ENCODE measurements at regions of chr7 and their contacts with region 1.

Region 1: GRCh38 chr7:20598459-20599309 is 16.8 kb upstream of the ABCB5 start:
- DNase-seq: peak in 6 of 9 donors; percentile 18 to 44 (median 31)
- ATAC-seq: peak; percentile 79
- H3K4me3 ChIP-seq: no peak overlapping the region
- H3K4me3 Mint-ChIP-seq: no peak overlapping the region
- H3K27ac ChIP-seq: no peak overlapping the region
- H3K27ac Mint-ChIP-seq: no peak overlapping the region
- H3K4me1 ChIP-seq: no peaks in the 10 kb centered on the region
- H3K4me1 Mint-ChIP-seq: peaks cover 0 to 5% (median 0%) of the 10 kb centered on the region in 7 donors
- H3K27me3 ChIP-seq: no peaks in the 10 kb centered on the region
- H3K27me3 Mint-ChIP-seq: peaks cover 5 to 33% (median 22%) of the 10 kb centered on the region in 5 donors

Region 2: DNA sequence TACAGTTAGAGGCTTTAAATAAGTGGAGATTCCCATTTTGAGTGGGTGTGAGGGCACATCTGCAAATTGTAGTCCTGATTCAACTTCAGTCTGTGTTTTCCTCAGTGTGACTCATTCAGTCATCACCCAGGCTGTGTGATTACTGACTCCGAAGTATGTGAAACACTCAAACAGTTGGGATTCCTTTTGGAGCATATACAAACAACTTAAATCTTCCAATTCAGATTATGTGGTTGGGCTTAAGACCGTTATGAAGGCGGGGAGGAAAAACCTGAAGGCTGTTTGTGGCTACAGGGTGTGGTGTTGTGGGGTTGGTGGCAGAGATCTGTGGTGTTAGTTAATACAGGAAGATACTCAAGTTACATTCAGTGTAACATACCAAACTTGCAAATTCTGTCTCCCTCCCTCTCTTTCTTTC is 1193.8 kb before region 1 on chr7:
- CTCF ChIA-PET with region 1: no interaction called
- POLR2A ChIA-PET with region 1: no interaction called
- intact Hi-C with region 1: no loop called
- DNase-seq: no peak
- ATAC-seq: peak; percentile 31
- H3K4me3 ChIP-seq: no peak overlapping the region
- H3K4me3 Mint-ChIP-seq: peak overlapping the region in 1 of 10 donors; percentile 51
- H3K27ac ChIP-seq: no peak overlapping the region
- H3K27ac Mint-ChIP-seq: peak overlapping the region in 1 of 9 donors; percentile 58
- H3K4me1 ChIP-seq: no peaks in the 10 kb centered on the region
- H3K4me1 Mint-ChIP-seq: peaks cover 0 to 6% (median 0%) of the 10 kb centered on the region in 7 donors
- H3K27me3 ChIP-seq: no peaks in the 10 kb centered on the region
- H3K27me3 Mint-ChIP-seq: no peaks in the 10 kb centered on the region

Region 3: DNA sequence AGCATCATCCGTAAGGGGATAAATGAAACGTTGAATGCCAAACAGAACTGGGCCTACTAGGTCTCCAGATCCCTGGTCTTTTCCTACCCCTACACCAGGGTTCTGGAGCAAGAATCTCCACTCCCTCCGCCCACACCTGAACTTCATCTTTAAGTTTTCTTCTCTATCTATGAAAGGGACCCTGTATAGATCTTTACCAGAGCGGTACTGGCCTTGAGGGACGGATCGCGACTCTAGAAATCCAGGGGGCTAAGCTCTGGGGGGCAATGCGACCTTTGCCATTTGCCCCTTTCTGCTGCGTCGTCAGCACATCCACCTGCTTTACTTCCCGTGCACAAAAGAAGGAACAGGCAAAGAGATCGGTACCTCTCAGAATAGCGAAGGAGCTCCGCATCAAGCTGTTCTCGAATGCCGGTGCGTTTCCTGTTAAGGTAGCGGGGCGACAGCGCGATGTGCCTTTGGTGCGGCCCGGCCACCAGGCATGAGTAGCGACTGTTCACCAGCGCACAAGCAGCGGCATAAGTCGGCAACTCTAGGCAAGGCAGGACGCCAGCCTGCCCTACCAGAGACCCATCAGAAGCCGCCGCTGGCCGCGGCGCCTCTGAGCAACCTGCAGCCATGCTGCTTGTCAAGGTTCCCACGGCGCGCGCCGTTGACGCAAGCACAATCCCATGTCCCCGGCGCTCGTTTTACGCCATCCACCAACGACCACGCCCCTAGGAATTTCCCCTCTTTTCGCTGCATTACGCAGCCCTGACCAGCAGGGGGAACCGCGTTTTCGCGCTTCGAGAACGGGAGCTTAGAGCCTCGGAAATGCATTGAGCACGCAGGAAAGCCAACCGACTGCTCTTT is 890.1 kb before region 1 on chr7 and contains the start of gene POLR1F:
- CTCF ChIA-PET with region 1: interaction called, 57 read pairs
- POLR2A ChIA-PET with region 1: interaction called, 5 read pairs
- intact Hi-C with region 1: loop called (anchors 1 kb)
- DNase-seq: peak; percentile 84 to 97 (median 95)
- ATAC-seq: peak; percentile 98
- H3K4me3 ChIP-seq: peak within 1 kb of the TSS; percentile 70
- H3K4me3 Mint-ChIP-seq: peak within 1 kb of the TSS; percentile 95 to 99 (median 97)
- H3K27ac ChIP-seq: peak within 1 kb of the TSS; percentile 77
- H3K27ac Mint-ChIP-seq: peak within 1 kb of the TSS; percentile 89 to 98 (median 95)
- H3K4me1 ChIP-seq: peaks cover 19 to 23% of the 10 kb centered on the region in 2 donors
- H3K4me1 Mint-ChIP-seq: peaks cover 31 to 66% (median 57%) of the 10 kb centered on the region in 7 donors
- H3K27me3 ChIP-seq: no peaks in the 10 kb centered on the region
- H3K27me3 Mint-ChIP-seq: peaks cover 0 to 5% (median 0%) of the 10 kb centered on the region in 5 donors
- total RNA-seq, gene POLR1F: 11.8 to 27.3 (median 19.0) TPM

Region 4: GRCh38 chr7:19713676-19714075 is 885.0 kb before region 1 on chr7:
- CTCF ChIA-PET with region 1: interaction called, 57 read pairs
- POLR2A ChIA-PET with region 1: interaction called, 5 read pairs
- intact Hi-C with region 1: loop called (anchors 1 kb)
- DNase-seq: peak in 7 of 9 donors; percentile 15 to 59 (median 52)
- ATAC-seq: no peak
- H3K4me3 ChIP-seq: no peak overlapping the region
- H3K4me3 Mint-ChIP-seq: no peak overlapping the region
- H3K27ac ChIP-seq: no peak overlapping the region
- H3K27ac Mint-ChIP-seq: peak overlapping the region in 1 of 9 donors; percentile 65
- H3K4me1 ChIP-seq: peaks cover 7% of the 10 kb centered on the region in 2 donors
- H3K4me1 Mint-ChIP-seq: peaks cover 7 to 25% (median 15%) of the 10 kb centered on the region in 7 donors
- H3K27me3 ChIP-seq: no peaks in the 10 kb centered on the region
- H3K27me3 Mint-ChIP-seq: peaks cover 0 to 21% (median 0%) of the 10 kb centered on the region in 5 donors

Region 5: GRCh38 chr7:19747740-19748339 is 850.8 kb before region 1 on chr7:
- CTCF ChIA-PET with region 1: interaction called, 3 read pairs
- POLR2A ChIA-PET with region 1: no interaction called
- intact Hi-C with region 1: loop called in 1 of 2 experiments (anchors 2 kb)
- DNase-seq: peak in 1 of 9 donors; percentile 1
- ATAC-seq: no peak
- H3K4me3 ChIP-seq: no peak overlapping the region
- H3K4me3 Mint-ChIP-seq: no peak overlapping the region
- H3K27ac ChIP-seq: no peak overlapping the region
- H3K27ac Mint-ChIP-seq: no peak overlapping the region
- H3K4me1 ChIP-seq: no peaks in the 10 kb centered on the region
- H3K4me1 Mint-ChIP-seq: no peaks in the 10 kb centered on the region
- H3K27me3 ChIP-seq: no peaks in the 10 kb centered on the region
- H3K27me3 Mint-ChIP-seq: peaks cover under 1 to 12% (median 4%) of the 10 kb centered on the region in 5 donors

Region 6: DNA sequence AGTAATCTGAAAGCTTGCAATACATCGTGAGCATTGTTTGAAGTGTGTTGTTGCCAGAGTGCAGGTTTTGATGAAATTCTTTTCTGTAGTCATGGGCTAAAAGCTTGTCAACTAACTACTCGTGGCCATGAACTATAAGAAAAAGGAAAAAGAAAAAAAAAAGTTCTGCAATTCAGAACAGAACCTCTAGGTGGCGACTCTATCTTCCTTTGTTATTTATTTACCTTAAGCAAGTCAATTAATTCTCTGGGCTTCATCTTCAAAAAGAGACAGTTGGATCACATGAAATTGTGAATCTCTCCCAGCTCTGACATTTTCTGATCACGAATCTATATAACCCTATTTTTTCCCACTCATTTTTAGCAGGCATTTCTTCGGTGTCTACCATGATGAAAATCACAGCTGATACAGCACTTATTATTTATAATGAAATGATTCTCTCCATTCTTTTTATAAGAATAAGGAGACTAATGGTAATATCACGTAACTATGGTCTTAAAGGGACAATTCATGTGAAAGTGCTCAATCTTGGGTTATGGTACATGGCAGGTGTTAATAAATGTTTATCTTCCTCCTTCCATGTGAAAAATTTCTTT is 844.1 kb before region 1 on chr7:
- CTCF ChIA-PET with region 1: interaction called, 3 read pairs
- POLR2A ChIA-PET with region 1: no interaction called
- intact Hi-C with region 1: loop called in 1 of 2 experiments (anchors 1 kb)
- DNase-seq: peak in 4 of 9 donors; percentile 1 to 26 (median 12)
- ATAC-seq: no peak
- H3K4me3 ChIP-seq: no peak overlapping the region
- H3K4me3 Mint-ChIP-seq: no peak overlapping the region
- H3K27ac ChIP-seq: no peak overlapping the region
- H3K27ac Mint-ChIP-seq: no peak overlapping the region
- H3K4me1 ChIP-seq: no peaks in the 10 kb centered on the region
- H3K4me1 Mint-ChIP-seq: no peaks in the 10 kb centered on the region
- H3K27me3 ChIP-seq: no peaks in the 10 kb centered on the region
- H3K27me3 Mint-ChIP-seq: peaks cover 0 to 13% (median 4%) of the 10 kb centered on the region in 5 donors

Region 7: GRCh38 chr7:19982841-19983835 is 615.5 kb before region 1 on chr7:
- CTCF ChIA-PET with region 1: no interaction called
- POLR2A ChIA-PET with region 1: no interaction called
- intact Hi-C with region 1: loop called in 1 of 2 experiments (anchors 5 kb)
- DNase-seq: no peak
- ATAC-seq: no peak
- H3K4me3 ChIP-seq: no peak overlapping the region
- H3K4me3 Mint-ChIP-seq: no peak overlapping the region
- H3K27ac ChIP-seq: no peak overlapping the region
- H3K27ac Mint-ChIP-seq: no peak overlapping the region
- H3K4me1 ChIP-seq: no peaks in the 10 kb centered on the region
- H3K4me1 Mint-ChIP-seq: no peaks in the 10 kb centered on the region
- H3K27me3 ChIP-seq: no peaks in the 10 kb centered on the region
- H3K27me3 Mint-ChIP-seq: no peaks in the 10 kb centered on the region

Region 8: DNA sequence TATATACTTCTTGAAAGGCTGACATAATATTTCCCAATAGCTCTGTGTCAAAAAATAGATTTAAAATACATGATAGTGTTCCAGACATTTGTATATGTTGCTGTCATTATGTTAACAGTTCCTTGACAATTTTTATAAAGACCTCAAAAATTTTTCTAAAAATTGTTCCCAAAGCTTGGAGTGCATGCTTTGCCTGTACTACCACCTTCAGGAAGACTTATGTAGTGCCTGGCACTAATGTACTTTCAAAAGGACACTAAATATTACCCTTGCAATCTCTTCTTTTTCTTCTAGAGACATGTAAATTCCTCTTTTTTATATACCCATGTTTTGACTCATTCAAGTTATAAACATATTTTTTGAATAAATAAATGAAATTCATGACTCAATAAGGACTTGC is 236.0 kb after region 1 on chr7:
- CTCF ChIA-PET with region 1: no interaction called
- POLR2A ChIA-PET with region 1: no interaction called
- intact Hi-C with region 1: no loop called
- DNase-seq: no peak
- ATAC-seq: no peak
- H3K4me3 ChIP-seq: no peak overlapping the region
- H3K4me3 Mint-ChIP-seq: no peak overlapping the region
- H3K27ac ChIP-seq: no peak overlapping the region
- H3K27ac Mint-ChIP-seq: no peak overlapping the region
- H3K4me1 ChIP-seq: no peaks in the 10 kb centered on the region
- H3K4me1 Mint-ChIP-seq: no peaks in the 10 kb centered on the region
- H3K27me3 ChIP-seq: no peaks in the 10 kb centered on the region
- H3K27me3 Mint-ChIP-seq: peaks cover 2 to 26% (median 18%) of the 10 kb centered on the region in 5 donors